ENCODE measurements at regions of chr12 and their contacts with region 1.

Region 1: DNA sequence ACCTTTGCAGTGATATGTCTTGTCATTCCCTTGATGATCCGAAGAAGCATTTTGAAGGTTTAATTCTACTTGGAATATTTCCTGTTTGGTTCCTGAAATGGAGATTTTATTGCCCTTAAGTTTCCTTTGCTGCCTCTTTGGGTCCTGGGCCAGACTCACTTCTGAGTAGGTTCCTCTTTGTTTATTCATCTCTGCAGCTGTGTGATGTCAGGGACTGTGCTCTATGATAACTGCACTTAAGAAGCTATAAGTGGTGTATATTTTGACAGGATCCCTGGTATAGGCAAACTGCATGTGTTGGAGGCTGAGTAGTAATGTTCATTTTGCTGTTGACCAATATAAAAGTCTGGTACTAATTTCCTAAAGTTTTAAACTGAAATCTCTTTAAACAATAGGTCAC is at the start of gene KLRC4:
- DNase-seq: peak; percentile 16
- ATAC-seq: peak; percentile 53; the same call in 1 of the 2 replicates
- H3K4me3 ChIP-seq: no peak within 1 kb of the TSS
- H3K27ac ChIP-seq: no peak within 1 kb of the TSS
- H3K4me1 ChIP-seq: no peaks in the 10 kb centered on the region
- H3K27me3 ChIP-seq: peaks cover 3% of the 10 kb centered on the region
- CTCF ChIP-seq: no peak
- POLR2A ChIP-seq: no peak
- RAD21 ChIP-seq: no peak
- total RNA-seq, gene KLRC4: not detected in 2 replicates

Region 2: DNA sequence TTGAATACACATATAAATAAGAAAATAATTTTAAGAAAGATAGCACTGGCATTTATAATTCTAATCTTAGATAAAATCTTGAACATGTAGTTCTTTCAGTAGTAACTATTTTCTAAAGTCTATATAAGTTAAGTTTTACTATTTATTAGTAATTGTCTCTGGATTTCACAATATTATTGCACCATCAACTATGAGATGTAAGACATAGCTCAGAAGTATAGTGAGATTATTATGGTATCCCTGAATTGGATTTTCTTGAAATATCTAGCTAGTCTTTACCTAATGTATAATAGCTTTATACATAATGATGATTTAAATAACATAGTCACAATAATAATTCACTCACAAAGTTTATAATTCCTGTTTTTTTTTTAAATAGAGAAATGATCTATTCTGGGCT is 431.5 kb before region 1 on chr12:
- CTCF ChIA-PET with region 1: no interaction called
- POLR2A ChIA-PET with region 1: no interaction called
- dilution Hi-C with region 1: no loop called
- in situ Hi-C with region 1: no loop called
- intact Hi-C with region 1: no loop called
- DNase-seq: no peak
- ATAC-seq: no peak
- H3K4me3 ChIP-seq: no peak overlapping the region
- H3K27ac ChIP-seq: no peak overlapping the region
- H3K4me1 ChIP-seq: no peaks in the 10 kb centered on the region
- H3K27me3 ChIP-seq: peaks cover 3% of the 10 kb centered on the region; the same call in 1 of the 2 replicates
- CTCF ChIP-seq: no peak
- POLR2A ChIP-seq: no peak
- RAD21 ChIP-seq: no peak

Region 3: GRCh38 chr12:10453144-10453543 is 43.8 kb after region 1 on chr12 and contains the start of gene KLRC1:
- CTCF ChIA-PET with region 1: no interaction called
- POLR2A ChIA-PET with region 1: no interaction called
- dilution Hi-C with region 1: no loop called
- in situ Hi-C with region 1: no loop called
- intact Hi-C with region 1: loop called (anchors 10 kb)
- DNase-seq: no peak
- ATAC-seq: no peak
- H3K4me3 ChIP-seq: no peak within 1 kb of the TSS
- H3K27ac ChIP-seq: no peak within 1 kb of the TSS
- H3K4me1 ChIP-seq: no peaks in the 10 kb centered on the region
- H3K27me3 ChIP-seq: peaks cover 2% of the 10 kb centered on the region; the same call in 1 of the 2 replicates
- CTCF ChIP-seq: no peak
- POLR2A ChIP-seq: no peak
- RAD21 ChIP-seq: no peak
- total RNA-seq, gene KLRC1: not detected in 2 replicates